ENCODE measurements at regions of chr14 and their contacts with region 1.

Region 1: DNA sequence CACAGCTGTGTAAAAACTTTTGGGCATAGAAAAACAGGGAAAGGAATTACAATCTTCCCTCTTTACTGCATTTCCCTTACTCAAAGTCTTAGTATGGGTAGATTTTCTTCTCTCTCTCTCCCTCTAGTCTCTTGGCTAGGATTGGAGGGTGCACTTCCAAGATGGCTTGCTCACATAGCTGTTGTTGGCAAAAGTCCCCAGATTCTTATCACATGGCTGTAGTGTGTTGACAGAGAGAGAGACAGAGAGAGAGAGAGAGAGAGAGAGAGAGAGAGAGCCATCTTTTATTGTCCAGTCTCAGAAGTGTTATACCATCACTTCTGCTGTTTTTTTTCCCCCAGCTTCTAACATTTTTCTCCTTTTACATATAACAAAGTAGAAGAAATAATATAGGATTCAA is 6.3 kb upstream of the OR4E2 start:
- DNase-seq: peak; percentile 13
- H3K4me3 Mint-ChIP-seq: no peak overlapping the region
- H3K27ac Mint-ChIP-seq: no peak overlapping the region
- H3K4me1 Mint-ChIP-seq: no peaks in the 10 kb centered on the region
- H3K27me3 Mint-ChIP-seq: peaks cover 66% of the 10 kb centered on the region
- CTCF ChIP-seq: no peak

Region 2: DNA sequence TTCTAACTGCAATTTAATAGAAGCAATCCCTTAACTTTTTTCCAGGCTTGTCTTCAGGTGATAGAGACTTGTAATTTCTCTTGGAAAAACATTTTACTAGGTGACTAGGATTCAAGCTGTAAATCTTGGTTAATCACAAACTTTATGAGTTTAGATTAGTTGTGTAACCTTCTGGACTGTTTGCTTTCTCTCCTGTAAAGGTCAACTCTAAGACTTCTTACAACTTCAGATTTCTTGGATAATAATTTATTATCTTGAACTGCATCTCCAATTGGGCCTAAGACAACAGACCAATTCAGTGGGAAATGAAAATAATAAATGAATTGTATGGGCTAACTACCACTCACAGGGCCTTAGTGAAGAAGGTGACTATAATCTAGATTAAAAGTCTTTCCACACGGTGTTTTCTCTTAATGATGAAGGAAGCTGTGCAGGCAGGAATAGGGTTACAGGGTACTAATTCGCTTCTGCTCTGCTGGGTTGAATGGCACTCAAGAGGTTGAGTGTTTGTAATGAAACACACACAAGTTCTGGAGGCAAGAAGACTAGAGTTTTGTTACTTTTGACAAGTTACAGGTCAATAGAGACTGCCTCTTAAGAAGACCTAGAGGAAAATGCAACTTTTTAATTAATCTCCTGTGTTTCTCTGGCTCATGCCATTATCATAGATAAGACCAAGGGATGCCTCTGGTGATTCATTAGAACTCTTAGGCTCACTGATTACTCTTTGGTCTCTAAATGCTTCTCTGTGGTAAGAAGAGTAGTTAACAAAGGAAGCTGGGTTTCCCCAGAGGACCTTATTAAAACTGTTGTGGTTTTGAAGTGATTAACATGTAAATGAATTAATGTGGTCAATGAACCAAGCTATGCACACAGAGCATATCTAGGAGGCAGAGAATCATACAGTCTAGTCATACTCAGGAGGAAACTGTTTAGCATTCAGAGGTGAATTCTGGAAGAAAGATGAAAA is 56.3 kb after region 1 on chr14:
- CTCF ChIA-PET with region 1: no interaction called
- POLR2A ChIA-PET with region 1: no interaction called
- intact Hi-C with region 1: loop called (anchors 10 kb)
- DNase-seq: no peak
- H3K4me3 Mint-ChIP-seq: no peak overlapping the region
- H3K27ac Mint-ChIP-seq: no peak overlapping the region
- H3K4me1 Mint-ChIP-seq: no peaks in the 10 kb centered on the region
- H3K27me3 Mint-ChIP-seq: peaks cover 66% of the 10 kb centered on the region
- CTCF ChIP-seq: no peak

Region 3: DNA sequence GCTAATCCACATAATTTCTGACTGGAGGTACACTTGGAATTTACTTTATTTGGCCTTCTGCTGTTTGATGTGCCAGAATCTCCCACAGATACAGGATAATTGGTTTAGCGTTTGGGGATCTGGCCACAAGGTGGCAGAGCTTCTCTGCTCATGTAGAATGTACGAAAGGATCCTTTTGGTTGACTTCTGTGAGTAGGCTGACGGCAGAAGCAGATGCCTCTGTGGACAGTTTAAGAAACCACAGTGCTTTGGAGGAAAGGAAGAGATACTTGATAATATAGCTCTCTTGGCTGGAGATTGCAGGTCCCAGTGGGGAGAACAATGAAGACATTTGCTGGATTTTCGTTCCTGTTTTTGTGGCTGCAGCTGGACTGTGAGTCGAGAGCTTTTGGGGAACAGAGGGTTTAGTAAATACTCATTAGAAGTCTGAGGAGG is 101.5 kb after region 1 on chr14:
- CTCF ChIA-PET with region 1: no interaction called
- POLR2A ChIA-PET with region 1: no interaction called
- intact Hi-C with region 1: loop called (anchors 10 kb)
- DNase-seq: peak; percentile 60
- H3K4me3 Mint-ChIP-seq: no peak overlapping the region
- H3K27ac Mint-ChIP-seq: no peak overlapping the region
- H3K4me1 Mint-ChIP-seq: no peaks in the 10 kb centered on the region
- H3K27me3 Mint-ChIP-seq: peaks cover 87% of the 10 kb centered on the region
- CTCF ChIP-seq: peak; percentile 52